GM12878 (cell line): ENCODE measurements at regions of chr4 and their contacts with region 1.

Region 1: DNA sequence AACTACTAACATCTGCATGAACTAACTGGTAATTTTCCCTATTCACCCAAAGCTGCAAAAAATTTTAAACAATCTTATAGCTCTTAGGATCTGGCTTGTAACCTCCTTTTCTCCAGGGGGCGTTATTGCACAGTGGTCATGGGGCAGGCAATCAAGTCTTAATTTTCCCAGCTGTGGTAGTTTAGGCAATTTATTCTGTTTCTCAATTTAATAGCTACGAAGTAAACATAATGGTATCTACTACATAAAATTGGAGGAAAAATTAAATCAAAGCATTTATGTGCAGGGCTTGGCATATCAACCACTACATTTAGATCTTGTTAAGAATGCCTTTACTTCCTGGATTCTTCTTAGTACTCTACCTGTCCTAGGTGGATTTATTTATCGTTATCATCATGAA is 137.4 kb upstream of the GUCY1A1 start:
- DNase-seq: no peak
- ATAC-seq: peak; percentile 71
- H3K4me3 ChIP-seq: no peak overlapping the region
- H3K27ac ChIP-seq: no peak overlapping the region
- H3K4me1 ChIP-seq: no peaks in the 10 kb centered on the region
- H3K27me3 ChIP-seq: peaks cover 0 to 3% of the 10 kb centered on the region in 2 experiments; a peak in 1 of 4 replicates
- CTCF ChIP-seq: peak; percentile 13 to 55 (median 20); a peak in 3 of 6 replicates
- EP300 ChIP-seq: no peak
- POLR2A ChIP-seq: no peak
- RAD21 ChIP-seq: peak; percentile 51

Region 2: DNA sequence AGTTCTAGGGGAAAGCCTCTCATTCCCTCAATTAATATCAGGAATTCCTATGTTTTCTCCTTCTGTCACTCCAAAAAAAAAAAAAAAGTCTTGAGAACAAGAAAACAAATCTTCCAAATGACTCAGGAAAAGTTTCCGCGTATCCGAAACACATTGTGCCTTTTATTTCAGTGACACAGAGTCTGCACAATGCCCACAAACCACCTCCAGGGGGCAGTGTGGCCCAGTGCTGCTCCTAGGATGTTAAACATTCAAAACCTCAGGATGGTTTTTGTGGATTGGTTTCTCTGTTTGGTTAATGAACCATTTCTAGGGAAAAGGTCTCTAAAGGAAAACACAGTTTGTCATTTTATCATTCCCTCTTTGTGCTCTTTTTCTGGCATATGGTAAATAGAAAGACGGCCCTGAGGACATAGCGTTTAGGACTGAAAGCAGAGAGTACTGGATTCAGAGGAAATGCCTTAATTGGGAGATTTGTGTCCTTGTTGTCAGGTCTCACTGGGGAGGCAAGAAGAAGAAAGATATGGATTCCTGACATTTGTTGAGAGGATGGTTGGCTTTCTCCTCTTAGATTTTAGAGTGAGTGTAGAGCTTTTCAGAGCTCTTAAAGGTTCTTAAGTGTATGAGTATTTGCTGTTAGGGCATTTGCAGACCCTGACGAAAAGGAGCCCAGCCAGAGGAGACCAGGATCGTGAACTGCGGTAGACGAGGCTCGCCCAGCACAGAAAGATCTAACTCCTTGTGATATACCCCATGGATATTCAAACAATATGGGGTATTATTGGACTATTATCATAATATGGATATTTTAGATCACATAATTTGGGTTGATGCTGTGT is 86.8 kb before region 1 on chr4:
- CTCF ChIA-PET with region 1: interaction called, 7 read pairs
- POLR2A ChIA-PET with region 1: no interaction called
- RAD21 ChIA-PET with region 1: interaction called, 18 read pairs
- SMC1A ChIA-PET with region 1: interaction called, 10 read pairs
- in situ Hi-C with region 1: no loop called
- intact Hi-C with region 1: no loop called
- DNase-seq: no peak
- ATAC-seq: peak; percentile 89
- H3K4me3 ChIP-seq: no peak overlapping the region
- H3K27ac ChIP-seq: no peak overlapping the region
- H3K4me1 ChIP-seq: no peaks in the 10 kb centered on the region
- H3K27me3 ChIP-seq: no peaks in the 10 kb centered on the region; a peak in 1 of 4 replicates
- CTCF ChIP-seq: peak; percentile 83 to 87 (median 87)
- EP300 ChIP-seq: no peak
- POLR2A ChIP-seq: no peak
- RAD21 ChIP-seq: peak; percentile 85

Region 3: GRCh38 chr4:155629183-155629825 is 100.0 kb after region 1 on chr4:
- CTCF ChIA-PET with region 1: interaction called, 8 read pairs
- POLR2A ChIA-PET with region 1: no interaction called
- RAD21 ChIA-PET with region 1: interaction called, 4 read pairs
- SMC1A ChIA-PET with region 1: interaction called, 12 read pairs
- in situ Hi-C with region 1: no loop called
- intact Hi-C with region 1: no loop called
- DNase-seq: no peak
- ATAC-seq: peak; percentile 19; the same call in 2 of the 3 replicates
- H3K4me3 ChIP-seq: no peak overlapping the region
- H3K27ac ChIP-seq: no peak overlapping the region
- H3K4me1 ChIP-seq: no peaks in the 10 kb centered on the region
- H3K27me3 ChIP-seq: no peaks in the 10 kb centered on the region
- CTCF ChIP-seq: no peak
- EP300 ChIP-seq: no peak
- POLR2A ChIP-seq: no peak
- RAD21 ChIP-seq: no peak

Region 4: DNA sequence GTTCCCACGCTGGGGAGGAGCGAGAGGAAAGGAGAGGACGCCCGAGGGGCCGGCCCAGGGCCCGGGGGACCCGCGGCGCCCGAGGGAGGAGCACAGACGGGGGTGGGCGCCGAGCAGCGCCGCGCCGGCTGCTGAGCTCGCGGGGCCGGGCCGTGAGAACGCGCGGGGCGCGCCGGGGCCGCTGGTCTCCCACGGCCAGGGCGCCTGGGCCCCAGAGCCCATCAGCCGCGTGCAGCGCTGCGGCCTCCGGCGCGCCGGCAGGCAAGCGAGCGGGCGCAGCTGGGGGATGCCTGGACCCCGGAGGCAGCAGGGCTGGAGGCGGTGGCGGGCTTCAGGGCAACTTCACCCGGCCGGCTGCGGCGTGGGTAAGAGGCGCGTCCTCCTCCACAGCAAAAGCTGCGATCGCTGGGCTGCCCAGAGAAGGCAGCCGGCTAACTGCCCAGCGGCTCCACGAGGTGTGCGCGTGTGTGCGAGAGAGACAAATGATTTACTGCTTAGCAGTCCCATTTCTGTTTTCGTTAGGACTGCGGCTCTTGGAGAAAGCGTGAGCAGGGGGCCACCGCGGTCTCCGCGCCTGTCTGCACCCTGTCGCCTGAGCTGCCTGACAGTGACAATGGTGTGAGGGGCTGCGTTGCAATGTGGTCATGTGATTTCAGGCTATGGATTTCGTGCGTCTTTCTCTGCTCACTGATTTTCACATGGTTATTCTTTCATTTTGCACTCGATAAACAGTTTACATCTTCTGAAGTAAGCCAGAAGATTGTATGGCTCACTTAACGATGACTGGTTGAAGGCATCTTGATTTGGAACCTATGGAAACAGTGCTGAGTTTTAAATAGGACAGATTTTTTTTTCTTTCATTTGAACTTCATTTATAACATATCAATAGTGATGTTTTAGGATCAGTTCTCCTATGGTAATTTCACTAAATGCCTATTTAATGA is 138.6 kb after region 1 on chr4:
- CTCF ChIA-PET with region 1: interaction called, 4 read pairs
- POLR2A ChIA-PET with region 1: no interaction called
- RAD21 ChIA-PET with region 1: interaction called, 21 read pairs
- SMC1A ChIA-PET with region 1: interaction called, 28 read pairs
- in situ Hi-C with region 1: no loop called
- intact Hi-C with region 1: no loop called
- DNase-seq: no peak
- ATAC-seq: peak; percentile 71
- H3K4me3 ChIP-seq: peak overlapping the region; percentile 41
- H3K27ac ChIP-seq: no peak overlapping the region
- H3K4me1 ChIP-seq: no peaks in the 10 kb centered on the region; the same call in 1 of the 2 replicates
- H3K27me3 ChIP-seq: peaks cover 4 to 21% of the 10 kb centered on the region in 2 experiments; a peak in 3 of 4 replicates
- CTCF ChIP-seq: no peak
- EP300 ChIP-seq: no peak
- POLR2A ChIP-seq: peak; percentile 41; the same call in 1 of the 2 replicates
- RAD21 ChIP-seq: no peak

Region 5: DNA sequence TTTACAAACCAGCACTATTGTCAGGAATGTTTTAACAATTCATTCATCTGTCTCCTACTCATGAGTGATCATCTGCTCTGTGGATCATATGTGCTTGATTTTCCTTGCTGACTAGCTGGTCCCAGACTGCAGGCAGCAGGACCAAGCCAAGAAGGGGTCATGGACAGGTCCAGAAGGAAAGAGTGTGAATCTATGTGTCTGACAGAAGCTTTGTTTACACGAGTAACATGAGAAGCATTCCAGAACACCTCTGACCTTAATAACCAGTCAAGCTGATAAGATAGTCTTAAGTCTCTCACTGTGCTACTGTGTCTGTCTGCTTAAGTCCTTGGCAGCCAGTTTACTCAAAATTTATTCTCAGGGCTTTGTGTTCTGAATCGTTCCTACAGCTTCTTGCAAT is 176.4 kb after region 1 on chr4:
- CTCF ChIA-PET with region 1: interaction called, 9 read pairs
- POLR2A ChIA-PET with region 1: no interaction called
- RAD21 ChIA-PET with region 1: interaction called, 17 read pairs
- SMC1A ChIA-PET with region 1: interaction called, 13 read pairs
- in situ Hi-C with region 1: no loop called
- intact Hi-C with region 1: no loop called
- DNase-seq: no peak
- ATAC-seq: no peak
- H3K4me3 ChIP-seq: no peak overlapping the region
- H3K27ac ChIP-seq: no peak overlapping the region
- H3K4me1 ChIP-seq: no peaks in the 10 kb centered on the region
- H3K27me3 ChIP-seq: no peaks in the 10 kb centered on the region
- CTCF ChIP-seq: no peak
- EP300 ChIP-seq: no peak
- POLR2A ChIP-seq: no peak
- RAD21 ChIP-seq: no peak

Region 6: GRCh38 chr4:155769090-155769489 is 239.8 kb after region 1 on chr4:
- CTCF ChIA-PET with region 1: interaction called, 6 read pairs
- POLR2A ChIA-PET with region 1: no interaction called
- RAD21 ChIA-PET with region 1: interaction called, 11 read pairs
- SMC1A ChIA-PET with region 1: interaction called, 18 read pairs
- in situ Hi-C with region 1: no loop called
- intact Hi-C with region 1: no loop called
- DNase-seq: no peak
- ATAC-seq: peak; percentile 86
- H3K4me3 ChIP-seq: no peak overlapping the region
- H3K27ac ChIP-seq: no peak overlapping the region
- H3K4me1 ChIP-seq: no peaks in the 10 kb centered on the region
- H3K27me3 ChIP-seq: no peaks in the 10 kb centered on the region
- CTCF ChIP-seq: no peak
- EP300 ChIP-seq: no peak
- POLR2A ChIP-seq: no peak
- RAD21 ChIP-seq: no peak